Activated B cell treated with CpG ODN at 0.5 μM for 24 hours (primary cell): ENCODE measurements at regions of chr6 and their contacts with region 1.

Region 1: GRCh38 chr6:109095027-109095834 is at the start of gene CEP57L1:
- DNase-seq: peak; percentile 86
- ATAC-seq: peak; percentile 71
- H3K4me3 Mint-ChIP-seq: peak within 1 kb of the TSS; percentile 97
- H3K27ac Mint-ChIP-seq: peak within 1 kb of the TSS; percentile 100
- H3K4me1 Mint-ChIP-seq: peaks cover 46% of the 10 kb centered on the region
- H3K27me3 Mint-ChIP-seq: no peaks in the 10 kb centered on the region
- CTCF ChIP-seq: no peak
- total RNA-seq, gene CEP57L1: 4.7 and 6.1 TPM in 2 replicates

Region 2: GRCh38 chr6:108260809-108261569 is 834.2 kb before region 1 on chr6 and contains the start of gene SNX3:
- CTCF ChIA-PET with region 1: no interaction called
- POLR2A ChIA-PET with region 1: interaction called, 10 read pairs
- intact Hi-C with region 1: loop called (anchors 1 kb)
- DNase-seq: peak; percentile 98
- ATAC-seq: peak; percentile 92
- H3K4me3 Mint-ChIP-seq: peak within 1 kb of the TSS; percentile 93
- H3K27ac Mint-ChIP-seq: peak within 1 kb of the TSS; percentile 98
- H3K4me1 Mint-ChIP-seq: peaks cover 43% of the 10 kb centered on the region
- H3K27me3 Mint-ChIP-seq: no peaks in the 10 kb centered on the region
- CTCF ChIP-seq: no peak
- total RNA-seq, gene SNX3: 121 and 133 TPM in 2 replicates

Region 3: DNA sequence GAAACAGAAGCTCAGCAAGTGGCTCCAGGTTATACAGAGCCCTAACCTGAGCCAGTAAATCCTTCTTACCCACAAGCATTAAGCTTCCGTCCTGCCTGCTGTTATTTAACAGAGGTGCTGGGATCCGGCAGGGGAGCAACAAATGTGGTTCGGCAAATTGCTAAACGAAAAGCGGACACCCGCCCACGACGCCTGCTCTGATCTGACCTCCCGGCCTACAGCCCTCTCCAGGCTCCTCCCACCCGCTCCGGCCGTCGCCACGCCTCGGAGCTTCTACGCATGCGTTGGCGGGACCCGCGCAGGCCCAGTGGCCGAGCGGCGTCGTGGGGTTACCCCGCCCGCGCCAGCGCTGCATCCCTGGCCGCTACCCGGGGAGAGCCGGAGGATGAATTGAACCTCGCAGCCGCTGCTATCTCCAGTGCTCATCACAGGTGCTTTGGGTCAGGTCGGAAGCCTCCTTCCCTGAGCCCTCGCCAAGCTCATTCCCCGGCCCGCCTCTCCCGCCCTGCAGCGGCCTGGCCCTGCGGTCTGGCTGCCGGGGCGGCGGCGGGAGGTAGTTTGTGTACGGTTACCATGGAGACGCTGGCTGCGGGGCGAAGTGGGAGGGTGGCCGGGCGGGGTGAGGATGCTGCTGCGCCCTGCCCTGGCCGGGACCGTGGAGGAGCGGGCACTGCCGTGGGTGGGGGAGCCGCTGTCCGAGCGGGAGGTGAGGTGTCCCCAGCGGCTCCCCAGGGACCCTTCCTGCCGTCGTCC is 246.9 kb before region 1 on chr6 and contains the start of gene ARMC2:
- CTCF ChIA-PET with region 1: no interaction called
- POLR2A ChIA-PET with region 1: interaction called, 7 read pairs
- intact Hi-C with region 1: loop called (anchors 1 kb)
- DNase-seq: peak; percentile 98
- ATAC-seq: peak; percentile 94
- H3K4me3 Mint-ChIP-seq: peak within 1 kb of the TSS; percentile 86
- H3K27ac Mint-ChIP-seq: peak within 1 kb of the TSS; percentile 83
- H3K4me1 Mint-ChIP-seq: peaks cover 14% of the 10 kb centered on the region
- H3K27me3 Mint-ChIP-seq: peaks cover under 1% of the 10 kb centered on the region
- CTCF ChIP-seq: no peak
- total RNA-seq, gene ARMC2: 3.5 and 4.3 TPM in 2 replicates

Region 4: DNA sequence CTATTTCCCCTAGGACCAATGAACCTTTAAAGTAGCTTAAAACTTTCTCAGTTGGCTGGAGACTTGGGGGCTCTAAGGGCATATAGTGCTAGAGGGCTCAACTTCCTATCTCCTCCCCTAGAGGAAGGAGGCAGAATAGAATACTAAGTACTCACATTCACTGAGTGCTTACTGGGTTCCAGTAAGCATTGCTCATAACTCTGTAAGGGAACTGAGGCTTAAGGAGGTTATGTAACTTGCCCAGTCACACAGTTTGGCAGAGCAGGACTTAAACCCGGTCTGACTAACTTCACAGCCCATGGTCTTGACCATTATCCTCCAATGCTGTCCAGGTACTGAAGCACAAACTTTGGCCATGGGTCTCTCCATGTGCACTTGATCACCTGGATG is 13.0 kb before region 1 on chr6:
- CTCF ChIA-PET with region 1: no interaction called
- POLR2A ChIA-PET with region 1: interaction called, 10 read pairs
- intact Hi-C with region 1: no loop called
- DNase-seq: no peak
- ATAC-seq: peak; percentile 25
- H3K4me3 Mint-ChIP-seq: no peak overlapping the region
- H3K27ac Mint-ChIP-seq: no peak overlapping the region
- H3K4me1 Mint-ChIP-seq: peaks cover under 1% of the 10 kb centered on the region
- H3K27me3 Mint-ChIP-seq: no peaks in the 10 kb centered on the region
- CTCF ChIP-seq: no peak

Region 5: DNA sequence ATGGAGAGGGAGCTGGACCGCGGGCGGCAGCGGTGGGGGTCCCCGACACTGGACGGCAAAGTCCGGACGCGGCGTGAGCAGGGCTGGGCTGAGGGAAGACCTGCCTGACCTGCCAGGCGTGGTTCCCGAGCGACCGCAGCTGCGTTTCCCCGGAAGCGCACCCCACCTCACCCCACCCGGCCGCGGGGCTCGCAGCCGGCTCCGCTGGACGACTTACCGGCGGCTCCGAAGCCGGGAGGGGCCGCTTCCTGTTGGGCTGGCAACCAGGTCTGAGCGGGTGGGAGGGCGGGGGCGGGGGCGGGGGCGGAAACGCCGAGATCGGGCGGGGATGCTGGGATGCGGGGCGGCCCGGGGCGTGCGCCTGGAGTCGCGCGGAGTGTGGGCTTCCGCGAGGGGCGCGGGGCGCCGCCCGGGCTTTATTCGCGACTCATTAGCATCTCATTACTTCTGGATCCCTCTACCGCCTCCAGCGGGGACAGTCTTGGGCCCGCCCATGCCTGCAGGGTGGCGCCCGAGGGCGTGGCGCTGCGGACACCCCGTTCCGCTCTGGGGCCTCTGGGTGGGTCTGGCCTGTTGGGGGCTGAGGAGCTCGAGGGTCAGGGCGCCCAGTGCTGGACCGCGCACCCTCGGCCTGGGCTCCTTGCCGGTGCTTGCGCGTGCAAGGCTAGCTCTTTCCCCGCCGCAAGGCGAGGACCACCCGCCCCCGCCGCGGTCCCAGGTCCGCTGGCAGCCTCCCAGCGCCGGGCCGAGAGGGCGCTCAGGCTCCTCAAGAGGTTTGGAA is 360.5 kb after region 1 on chr6 and contains the start of gene MICAL1:
- CTCF ChIA-PET with region 1: no interaction called
- POLR2A ChIA-PET with region 1: interaction called, 25 read pairs
- intact Hi-C with region 1: loop called (anchors 1 kb)
- DNase-seq: peak; percentile 82
- ATAC-seq: peak; percentile 58
- H3K4me3 Mint-ChIP-seq: peak within 1 kb of the TSS; percentile 97
- H3K27ac Mint-ChIP-seq: peak within 1 kb of the TSS; percentile 98
- H3K4me1 Mint-ChIP-seq: peaks cover 80% of the 10 kb centered on the region
- H3K27me3 Mint-ChIP-seq: no peaks in the 10 kb centered on the region
- CTCF ChIP-seq: no peak
- total RNA-seq, gene MICAL1: 104 and 120 TPM in 2 replicates

Region 6: GRCh38 chr6:110179401-110180227 is 1084.4 kb after region 1 on chr6 and contains the start of gene WASF1:
- CTCF ChIA-PET with region 1: no interaction called
- POLR2A ChIA-PET with region 1: interaction called, 3 read pairs
- intact Hi-C with region 1: loop called (anchors 1 kb)
- DNase-seq: peak; percentile 92
- ATAC-seq: peak; percentile 80
- H3K4me3 Mint-ChIP-seq: no peak within 1 kb of the TSS
- H3K27ac Mint-ChIP-seq: peak within 1 kb of the TSS; percentile 86
- H3K4me1 Mint-ChIP-seq: peaks cover 7% of the 10 kb centered on the region
- H3K27me3 Mint-ChIP-seq: no peaks in the 10 kb centered on the region
- CTCF ChIP-seq: no peak
- total RNA-seq, gene WASF1: 5.1 and 6.2 TPM in 2 replicates

Region 7: GRCh38 chr6:110567957-110568696 is 1472.9 kb after region 1 on chr6:
- CTCF ChIA-PET with region 1: no interaction called
- POLR2A ChIA-PET with region 1: no interaction called
- intact Hi-C with region 1: no loop called
- DNase-seq: no peak
- ATAC-seq: peak; percentile 31
- H3K4me3 Mint-ChIP-seq: no peak overlapping the region
- H3K27ac Mint-ChIP-seq: peak overlapping the region; percentile 0
- H3K4me1 Mint-ChIP-seq: peaks cover 9% of the 10 kb centered on the region
- H3K27me3 Mint-ChIP-seq: no peaks in the 10 kb centered on the region
- CTCF ChIP-seq: no peak